ENCODE measurements at regions of chr11 and their contacts with region 1.

Region 1: GRCh38 chr11:8794677-8795103 is 112.1 kb downstream of the RPL27A start:
- DNase-seq: no peak
- ATAC-seq: peak; percentile 86

Region 2: GRCh38 chr11:8309862-8310261 is 484.8 kb before region 1 on chr11:
- intact Hi-C with region 1: no loop called
- DNase-seq: no peak
- ATAC-seq: no peak

Region 3: GRCh38 chr11:8728563-8728962 is 66.1 kb before region 1 on chr11:
- intact Hi-C with region 1: loop called (anchors 5 kb)
- DNase-seq: no peak
- ATAC-seq: peak; percentile 16

Region 4: GRCh38 chr11:8739309-8739793 is 55.3 kb before region 1 on chr11:
- intact Hi-C with region 1: no loop called
- DNase-seq: no peak
- ATAC-seq: peak; percentile 55

Measured in Right ventricle myocardium superior (tissue), 1 donor.